B cell (primary cell): ENCODE measurements at regions of chr18 and their contacts with region 1.

Region 1: GRCh38 chr18:26813043-26813442 is 52.5 kb downstream of the AQP4 start:
- DNase-seq: peak; percentile 19
- ATAC-seq: no peak
- H3K4me3 ChIP-seq: no peak overlapping the region
- H3K4me3 Mint-ChIP-seq: no peak overlapping the region
- H3K27ac ChIP-seq: no peak overlapping the region
- H3K27ac Mint-ChIP-seq: no peak overlapping the region
- H3K4me1 ChIP-seq: no peaks in the 10 kb centered on the region
- H3K4me1 Mint-ChIP-seq: no peaks in the 10 kb centered on the region
- H3K27me3 ChIP-seq: no peaks in the 10 kb centered on the region
- H3K27me3 Mint-ChIP-seq: no peaks in the 10 kb centered on the region
- CTCF ChIP-seq: no peak

Region 2: DNA sequence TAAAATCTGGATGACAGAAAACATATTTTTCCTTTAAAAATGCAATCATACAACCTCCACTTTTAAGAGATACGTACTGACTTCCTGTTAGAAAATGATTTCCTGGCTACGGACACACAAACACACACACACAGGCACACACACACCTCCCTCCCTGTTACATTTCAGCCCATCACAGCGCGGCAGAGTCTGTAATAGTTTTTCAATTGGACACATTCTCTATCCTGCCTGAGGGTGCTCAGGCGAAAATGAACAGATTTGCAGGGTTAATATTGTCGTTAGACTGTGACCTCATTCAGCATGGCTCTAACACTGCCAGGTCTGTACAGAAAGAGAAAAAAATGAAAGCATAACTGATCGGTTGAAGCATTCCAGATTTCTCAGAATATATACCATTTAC is 309.7 kb before region 1 on chr18:
- CTCF ChIA-PET with region 1: no interaction called
- POLR2A ChIA-PET with region 1: no interaction called
- intact Hi-C with region 1: no loop called
- DNase-seq: no peak
- ATAC-seq: no peak
- H3K4me3 ChIP-seq: no peak overlapping the region
- H3K4me3 Mint-ChIP-seq: no peak overlapping the region
- H3K27ac ChIP-seq: no peak overlapping the region
- H3K27ac Mint-ChIP-seq: no peak overlapping the region
- H3K4me1 ChIP-seq: no peaks in the 10 kb centered on the region
- H3K4me1 Mint-ChIP-seq: no peaks in the 10 kb centered on the region
- H3K27me3 ChIP-seq: no peaks in the 10 kb centered on the region
- H3K27me3 Mint-ChIP-seq: no peaks in the 10 kb centered on the region
- CTCF ChIP-seq: no peak

Region 3: GRCh38 chr18:27005589-27005988 is 192.5 kb after region 1 on chr18:
- CTCF ChIA-PET with region 1: no interaction called
- POLR2A ChIA-PET with region 1: no interaction called
- intact Hi-C with region 1: loop called (anchors 2 kb)
- DNase-seq: no peak
- ATAC-seq: no peak
- H3K4me3 ChIP-seq: no peak overlapping the region
- H3K4me3 Mint-ChIP-seq: no peak overlapping the region
- H3K27ac ChIP-seq: no peak overlapping the region
- H3K27ac Mint-ChIP-seq: no peak overlapping the region
- H3K4me1 ChIP-seq: no peaks in the 10 kb centered on the region
- H3K4me1 Mint-ChIP-seq: no peaks in the 10 kb centered on the region
- H3K27me3 ChIP-seq: no peaks in the 10 kb centered on the region
- H3K27me3 Mint-ChIP-seq: peaks cover 4% of the 10 kb centered on the region
- CTCF ChIP-seq: no peak